H1 (cell line): ENCODE measurements at regions of chr14 and their contacts with region 1.

Region 1: GRCh38 chr14:99755629-99756603 is 37.3 kb upstream of the EML1 start:
- DNase-seq: no peak
- H3K4me3 ChIP-seq: no peak overlapping the region
- H3K27ac ChIP-seq: no peak overlapping the region
- H3K4me1 ChIP-seq: peaks cover 0 to 17% (median 9%) of the 10 kb centered on the region in 4 experiments; a peak in 6 of 7 replicates
- H3K27me3 ChIP-seq: no peaks in the 10 kb centered on the region
- CTCF ChIP-seq: no peak
- EP300 ChIP-seq: no peak
- POLR2A ChIP-seq: no peak
- RAD21 ChIP-seq: no peak

Region 2: DNA sequence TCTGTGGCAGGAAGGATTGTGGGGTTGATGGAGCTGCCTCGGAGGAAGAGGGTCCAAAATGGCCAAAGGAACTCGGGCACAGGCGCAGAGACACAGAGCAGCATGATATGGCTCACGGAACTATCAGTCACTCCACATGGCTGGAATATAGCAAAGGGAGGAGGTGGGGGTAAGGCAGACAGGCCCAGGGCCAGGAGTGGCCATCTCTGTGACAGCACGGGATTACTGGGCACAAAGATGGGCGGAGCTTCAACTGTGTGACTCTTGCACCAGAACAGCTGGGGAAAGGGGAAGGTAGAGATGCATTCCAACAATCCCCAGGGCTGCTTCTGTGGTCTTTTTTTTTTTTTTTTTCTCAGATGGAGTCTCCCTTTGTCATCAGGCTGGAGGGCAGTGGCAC is 12.5 kb after region 1 on chr14:
- CTCF ChIA-PET with region 1: interaction called, 24 read pairs
- POLR2A ChIA-PET with region 1: interaction called, 3 read pairs
- DNase-seq: no peak
- H3K4me3 ChIP-seq: no peak overlapping the region
- H3K27ac ChIP-seq: no peak overlapping the region
- H3K4me1 ChIP-seq: peaks cover 4 to 11% (median 6%) of the 10 kb centered on the region in 4 experiments
- H3K27me3 ChIP-seq: no peaks in the 10 kb centered on the region
- CTCF ChIP-seq: no peak
- EP300 ChIP-seq: no peak
- POLR2A ChIP-seq: no peak
- RAD21 ChIP-seq: no peak